ENCODE measurements at regions of chrX and their contacts with region 1.

Region 1: GRCh38 chrX:30141966-30142365 is 73.4 kb upstream of the MAGEB2 start:
- DNase-seq: peak; percentile 6
- H3K4me3 Mint-ChIP-seq: no peak overlapping the region
- H3K27ac Mint-ChIP-seq: no peak overlapping the region
- H3K4me1 Mint-ChIP-seq: no peaks in the 10 kb centered on the region
- H3K27me3 Mint-ChIP-seq: no peaks in the 10 kb centered on the region

Region 2: GRCh38 chrX:30504309-30504708 is 362.3 kb after region 1 on chrX:
- CTCF ChIA-PET with region 1: interaction called, 3 read pairs
- intact Hi-C with region 1: loop called (anchors 2 kb)
- DNase-seq: no peak
- H3K4me3 Mint-ChIP-seq: no peak overlapping the region
- H3K27ac Mint-ChIP-seq: no peak overlapping the region
- H3K4me1 Mint-ChIP-seq: no peaks in the 10 kb centered on the region
- H3K27me3 Mint-ChIP-seq: no peaks in the 10 kb centered on the region

Measured in activated naive CD4-positive, alpha-beta T cell treated with anti-CD3 and anti-CD28 coated beads for 36 hours (primary cell).